ENCODE measurements at regions of chr21 and their contacts with region 1.

Region 1: GRCh38 chr21:42220138-42220701 is 1.3 kb downstream of the ABCG1 start:
- DNase-seq: peak; percentile 62 to 91 (median 86)
- H3K4me3 ChIP-seq: peak overlapping the region; percentile 83
- H3K4me3 Mint-ChIP-seq: peak overlapping the region; percentile 89 to 95 (median 94)
- H3K27ac ChIP-seq: peak overlapping the region; percentile 86
- H3K27ac Mint-ChIP-seq: peak overlapping the region; percentile 86 to 98 (median 94)
- H3K4me1 ChIP-seq: peaks cover 14% of the 10 kb centered on the region
- H3K4me1 Mint-ChIP-seq: peaks cover 18 to 44% (median 36%) of the 10 kb centered on the region in 3 donors
- H3K27me3 ChIP-seq: no peaks in the 10 kb centered on the region
- H3K27me3 Mint-ChIP-seq: no peaks in the 10 kb centered on the region

Region 2: GRCh38 chr21:42187976-42188653 is 32.1 kb before region 1 on chr21:
- CTCF ChIA-PET with region 1: interaction called, 6 read pairs
- POLR2A ChIA-PET with region 1: interaction called, 22 read pairs
- DNase-seq: peak; percentile 69 to 91 (median 86)
- H3K4me3 ChIP-seq: peak overlapping the region; percentile 38
- H3K4me3 Mint-ChIP-seq: peak overlapping the region; percentile 34 to 83 (median 75)
- H3K27ac ChIP-seq: peak overlapping the region; percentile 58
- H3K27ac Mint-ChIP-seq: peak overlapping the region; percentile 85 to 98 (median 98)
- H3K4me1 ChIP-seq: peaks cover 94% of the 10 kb centered on the region
- H3K4me1 Mint-ChIP-seq: peaks cover 70 to 79% (median 77%) of the 10 kb centered on the region in 3 donors
- H3K27me3 ChIP-seq: no peaks in the 10 kb centered on the region
- H3K27me3 Mint-ChIP-seq: peaks cover 0 to 3% of the 10 kb centered on the region in 2 donors

Region 3: DNA sequence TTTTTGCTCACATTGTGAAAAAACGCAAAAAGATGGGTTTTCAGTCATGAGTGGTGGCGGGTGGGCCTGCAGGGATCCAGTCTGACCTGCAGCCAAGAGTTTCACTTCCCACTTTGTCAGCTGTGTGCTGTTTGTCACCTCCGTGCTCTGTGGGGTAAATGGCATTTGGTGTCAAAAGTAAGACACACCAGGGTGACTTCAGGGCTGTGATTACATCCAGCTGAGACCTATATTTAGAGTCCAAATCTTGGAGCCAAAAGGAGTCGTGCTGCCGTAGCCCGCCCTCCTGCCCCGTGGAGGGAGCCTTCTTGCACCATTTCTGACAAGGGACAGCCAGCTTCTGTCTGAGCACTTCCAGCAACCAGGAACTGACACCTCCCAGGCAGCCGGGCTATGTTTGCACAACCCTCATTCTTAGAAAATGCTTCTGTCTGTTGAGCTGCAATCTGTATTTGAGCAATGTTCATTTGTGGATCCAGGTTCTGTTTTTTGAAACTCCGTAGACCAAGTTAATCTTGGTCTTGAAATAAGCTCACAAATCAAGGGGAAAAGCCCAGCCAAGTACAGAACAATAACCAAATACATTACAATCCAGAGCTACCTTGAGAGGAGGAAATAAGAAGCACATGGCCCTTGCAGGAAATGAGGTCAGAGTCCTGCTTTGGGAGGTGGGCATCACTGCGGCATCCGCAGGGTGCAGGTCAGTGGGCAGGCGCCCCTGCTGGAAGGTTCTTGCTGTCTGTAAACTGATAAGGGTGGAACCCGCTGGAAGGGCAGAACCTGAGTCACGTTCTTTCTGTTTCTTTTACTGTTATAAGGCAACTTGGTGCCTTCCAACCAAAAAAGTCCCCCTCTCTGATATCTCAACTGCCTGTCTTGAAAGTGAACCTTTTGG is 13.1 kb after region 1 on chr21:
- CTCF ChIA-PET with region 1: interaction called, 19 read pairs
- POLR2A ChIA-PET with region 1: interaction called, 20 read pairs
- DNase-seq: peak; percentile 77 to 88 (median 84)
- H3K4me3 ChIP-seq: peak overlapping the region; percentile 72
- H3K4me3 Mint-ChIP-seq: peak overlapping the region; percentile 69 to 91 (median 75)
- H3K27ac ChIP-seq: peak overlapping the region; percentile 78
- H3K27ac Mint-ChIP-seq: peak overlapping the region; percentile 68 to 99 (median 97)
- H3K4me1 ChIP-seq: peaks cover 89% of the 10 kb centered on the region
- H3K4me1 Mint-ChIP-seq: peaks cover 84 to 98% (median 98%) of the 10 kb centered on the region in 3 donors
- H3K27me3 ChIP-seq: no peaks in the 10 kb centered on the region
- H3K27me3 Mint-ChIP-seq: peaks cover 0 to 3% of the 10 kb centered on the region in 2 donors